ENCODE measurements at regions of chr16 and their contacts with region 1.

Region 1: GRCh38 chr16:77183137-77183536 is 7.9 kb upstream of the MON1B start:
- DNase-seq: no peak
- H3K4me3 ChIP-seq: no peak overlapping the region
- H3K4me3 Mint-ChIP-seq: peak overlapping the region in 1 of 2 donors; percentile 49
- H3K27ac ChIP-seq: no peak overlapping the region
- H3K27ac Mint-ChIP-seq: no peak overlapping the region
- H3K4me1 ChIP-seq: peaks cover 8 to 9% of the 10 kb centered on the region in 2 donors
- H3K4me1 Mint-ChIP-seq: peaks cover 10% of the 10 kb centered on the region
- H3K27me3 ChIP-seq: peaks cover 2 to 11% of the 10 kb centered on the region in 2 donors
- H3K27me3 Mint-ChIP-seq: peaks cover 6 to 11% (median 8%) of the 10 kb centered on the region in 3 donors
- CTCF ChIP-seq: no peak

Region 2: DNA sequence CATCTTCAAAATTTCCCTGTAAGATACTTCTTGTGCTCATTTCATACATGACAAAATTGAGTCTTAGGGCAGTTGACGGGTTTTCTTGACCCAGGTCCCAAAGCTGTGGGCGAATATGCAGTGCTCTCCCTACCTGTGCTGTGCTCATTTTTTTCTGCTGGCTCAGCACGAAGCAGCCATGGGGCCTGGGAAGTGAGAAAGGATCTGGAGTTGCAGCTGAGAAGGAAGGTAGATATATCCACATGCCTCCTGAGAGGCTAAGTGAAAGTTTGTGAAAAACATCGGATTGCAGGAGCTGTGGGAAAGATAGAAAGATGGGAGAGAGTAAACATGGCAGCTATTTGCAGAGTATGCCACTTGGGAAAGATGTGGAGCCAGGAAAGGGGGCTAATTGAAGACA is 35.0 kb before region 1 on chr16:
- intact Hi-C with region 1: no loop called
- DNase-seq: no peak
- H3K4me3 ChIP-seq: no peak overlapping the region
- H3K4me3 Mint-ChIP-seq: no peak overlapping the region
- H3K27ac ChIP-seq: no peak overlapping the region
- H3K27ac Mint-ChIP-seq: no peak overlapping the region
- H3K4me1 ChIP-seq: no peaks in the 10 kb centered on the region
- H3K4me1 Mint-ChIP-seq: no peaks in the 10 kb centered on the region
- H3K27me3 ChIP-seq: no peaks in the 10 kb centered on the region
- H3K27me3 Mint-ChIP-seq: peaks cover 0 to 5% (median 1%) of the 10 kb centered on the region in 3 donors
- CTCF ChIP-seq: no peak

Region 3: DNA sequence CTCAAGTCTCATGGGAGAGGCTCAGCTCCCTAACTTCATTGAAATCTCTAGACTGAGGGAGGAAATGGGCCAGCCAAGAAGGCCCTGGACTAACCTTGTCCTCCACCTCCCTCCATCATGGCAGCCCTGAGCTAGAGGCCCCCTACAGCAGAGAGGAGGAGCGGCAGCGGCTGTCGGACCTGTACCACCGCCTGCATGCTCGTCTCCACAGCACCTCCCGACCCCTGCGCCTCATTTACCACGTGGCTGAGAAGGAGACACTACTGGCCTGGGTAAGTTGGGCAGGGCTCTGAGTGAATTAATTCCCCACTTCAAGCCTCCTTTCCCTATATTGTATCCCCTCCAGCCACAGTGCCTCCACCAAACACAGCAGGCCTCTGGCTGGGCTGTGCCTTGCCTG is 12.3 kb after region 1 on chr16:
- intact Hi-C with region 1: no loop called
- DNase-seq: no peak
- H3K4me3 ChIP-seq: no peak overlapping the region
- H3K4me3 Mint-ChIP-seq: no peak overlapping the region
- H3K27ac ChIP-seq: peak overlapping the region in 1 of 2 donors; percentile 47
- H3K27ac Mint-ChIP-seq: peak overlapping the region in 2 of 7 donors; percentile 48
- H3K4me1 ChIP-seq: peaks cover 16 to 27% of the 10 kb centered on the region in 2 donors
- H3K4me1 Mint-ChIP-seq: peaks cover 29% of the 10 kb centered on the region
- H3K27me3 ChIP-seq: no peaks in the 10 kb centered on the region
- H3K27me3 Mint-ChIP-seq: no peaks in the 10 kb centered on the region
- CTCF ChIP-seq: no peak

Region 4: DNA sequence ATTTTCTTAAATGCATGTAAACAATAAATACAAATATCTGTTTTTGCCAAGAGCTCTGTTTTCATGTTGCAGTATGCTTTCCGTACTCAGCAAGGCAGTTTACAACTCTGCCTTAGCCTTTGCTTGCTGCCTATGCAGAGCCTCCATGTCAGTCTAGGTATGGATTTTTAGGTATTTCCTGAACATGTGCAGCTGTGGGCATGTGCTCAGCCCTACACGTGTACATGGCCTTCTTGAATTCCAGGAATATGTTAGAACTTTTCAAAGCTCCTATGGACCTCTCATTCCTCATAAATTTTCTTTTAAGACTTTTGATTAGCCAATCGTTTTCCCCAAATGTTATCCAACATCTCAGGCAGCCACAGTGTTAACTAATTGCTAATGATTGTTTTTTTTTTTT is 79.8 kb after region 1 on chr16:
- intact Hi-C with region 1: no loop called
- DNase-seq: no peak
- H3K4me3 ChIP-seq: no peak overlapping the region
- H3K4me3 Mint-ChIP-seq: no peak overlapping the region
- H3K27ac ChIP-seq: no peak overlapping the region
- H3K27ac Mint-ChIP-seq: no peak overlapping the region
- H3K4me1 ChIP-seq: no peaks in the 10 kb centered on the region
- H3K4me1 Mint-ChIP-seq: no peaks in the 10 kb centered on the region
- H3K27me3 ChIP-seq: no peaks in the 10 kb centered on the region
- H3K27me3 Mint-ChIP-seq: peaks cover 3% of the 10 kb centered on the region in 3 donors
- CTCF ChIP-seq: no peak

Region 5: DNA sequence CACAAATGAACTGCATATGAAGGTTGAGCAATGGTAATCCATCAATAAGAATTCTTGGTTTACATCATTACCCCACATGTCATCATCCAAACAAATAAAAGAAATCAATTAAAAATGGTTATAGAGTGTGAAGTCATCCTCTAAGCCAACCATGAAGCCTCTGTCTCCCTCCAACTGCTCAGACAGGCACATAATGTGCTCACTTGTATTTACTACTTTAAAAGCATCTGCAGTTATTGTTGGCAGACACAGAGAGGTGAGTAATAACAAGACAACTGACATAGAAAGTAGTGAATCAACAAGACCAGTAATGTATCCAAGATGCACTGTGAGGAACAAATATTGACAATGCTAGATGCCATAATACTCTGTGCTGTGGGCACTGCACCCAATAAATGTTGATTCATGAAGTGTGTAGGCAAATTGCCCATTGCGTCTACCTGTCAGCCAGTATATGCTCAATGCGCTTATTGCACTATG is 231.7 kb after region 1 on chr16:
- intact Hi-C with region 1: no loop called
- DNase-seq: no peak
- H3K4me3 ChIP-seq: no peak overlapping the region
- H3K4me3 Mint-ChIP-seq: no peak overlapping the region
- H3K27ac ChIP-seq: no peak overlapping the region
- H3K27ac Mint-ChIP-seq: no peak overlapping the region
- H3K4me1 ChIP-seq: no peaks in the 10 kb centered on the region
- H3K4me1 Mint-ChIP-seq: no peaks in the 10 kb centered on the region
- H3K27me3 ChIP-seq: no peaks in the 10 kb centered on the region
- H3K27me3 Mint-ChIP-seq: peaks cover 2 to 3% (median 3%) of the 10 kb centered on the region in 3 donors
- CTCF ChIP-seq: no peak

Region 6: GRCh38 chr16:78099372-78100161 is 916.4 kb after region 1 on chr16 and contains the start of gene WWOX:
- intact Hi-C with region 1: loop called in 1 of 2 experiments (anchors 10 kb)
- DNase-seq: peak; percentile 96 to 98 (median 96)
- H3K4me3 ChIP-seq: peak within 1 kb of the TSS; percentile 78 to 99 (median 93)
- H3K4me3 Mint-ChIP-seq: peak within 1 kb of the TSS; percentile 90 to 95
- H3K27ac ChIP-seq: peak within 1 kb of the TSS; percentile 88
- H3K27ac Mint-ChIP-seq: peak within 1 kb of the TSS; percentile 83 to 94 (median 92)
- H3K4me1 ChIP-seq: peaks cover 14 to 17% of the 10 kb centered on the region in 2 donors
- H3K4me1 Mint-ChIP-seq: peaks cover 12% of the 10 kb centered on the region
- H3K27me3 ChIP-seq: no peaks in the 10 kb centered on the region
- H3K27me3 Mint-ChIP-seq: peaks cover 1 to 5% (median 2%) of the 10 kb centered on the region in 3 donors
- CTCF ChIP-seq: peak; percentile 94
- polyA plus RNA-seq, gene WWOX: 4.0 to 7.0 (median 6.3) TPM

Measured in CD14-positive monocyte (primary cell).